Mammary epithelial cell (primary cell): ENCODE measurements at regions of chr9 and their contacts with region 1.

Region 1: DNA sequence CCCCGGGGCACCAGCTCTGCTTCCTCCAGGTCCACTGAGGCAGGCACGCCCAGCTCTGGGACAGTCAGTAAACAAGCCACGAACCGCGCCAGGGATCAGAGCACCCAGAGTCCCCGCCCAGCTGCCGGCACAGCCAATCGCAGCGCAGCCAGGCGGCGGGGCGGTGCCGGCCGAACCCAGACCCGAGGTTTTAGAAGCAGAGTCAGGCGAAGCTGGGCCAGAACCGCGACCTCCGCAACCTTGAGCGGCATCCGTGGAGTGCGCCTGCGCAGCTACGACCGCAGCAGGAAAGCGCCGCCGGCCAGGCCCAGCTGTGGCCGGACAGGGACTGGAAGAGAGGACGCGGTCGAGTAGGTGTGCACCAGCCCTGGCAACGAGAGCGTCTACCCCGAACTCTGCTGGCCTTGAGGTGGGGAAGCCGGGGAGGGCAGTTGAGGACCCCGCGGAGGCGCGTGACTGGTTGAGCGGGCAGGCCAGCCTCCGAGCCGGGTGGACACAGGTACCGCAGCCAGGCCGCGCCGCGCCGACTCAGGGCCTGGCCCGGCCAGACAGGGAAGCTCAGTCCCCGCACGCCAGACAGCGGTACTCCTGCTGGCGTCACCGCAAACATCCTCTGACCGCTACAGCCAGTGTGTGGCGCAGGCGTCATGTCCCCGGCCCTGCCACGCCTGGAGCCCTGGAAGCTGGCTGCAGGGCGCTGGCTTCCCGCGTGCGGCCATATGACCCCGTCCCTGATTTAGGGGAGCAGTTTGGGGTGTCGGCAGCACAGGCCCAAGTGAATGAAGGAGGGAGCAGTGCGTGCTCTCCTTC is at the start of gene CTSL:
- DNase-seq: peak; percentile 70
- H3K4me3 ChIP-seq: peak within 1 kb of the TSS; percentile 48 to 78 (median 70)
- H3K27ac ChIP-seq: peak within 1 kb of the TSS; percentile 58
- H3K4me1 ChIP-seq: no peaks in the 10 kb centered on the region
- H3K27me3 ChIP-seq: no peaks in the 10 kb centered on the region
- CTCF ChIP-seq: peak in 1 of 2 donors; percentile 49
- total RNA-seq, gene CTSL: 38.8 to 109 TPM

Region 2: DNA sequence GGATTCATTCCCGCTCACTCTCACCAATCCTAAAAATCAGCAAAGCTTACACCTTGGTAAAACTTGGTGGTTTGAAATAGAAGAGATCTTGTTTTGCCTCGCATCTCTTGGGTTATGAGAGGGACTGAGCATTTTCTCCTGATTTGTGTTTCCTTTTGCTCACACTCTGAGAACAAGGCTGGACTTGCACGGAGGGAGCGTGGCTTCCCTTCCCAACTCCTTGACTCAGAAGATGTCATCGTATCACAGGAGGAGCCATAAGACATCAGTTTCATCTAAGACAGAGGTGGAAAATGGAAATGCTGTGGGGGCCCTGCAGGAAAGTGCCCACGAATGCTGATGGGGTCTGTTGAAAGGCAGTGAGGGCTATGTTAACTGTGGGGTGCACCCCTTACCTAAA is 37.2 kb after region 1 on chr9:
- CTCF ChIA-PET with region 1: no interaction called
- dilution Hi-C with region 1: no loop called
- in situ Hi-C with region 1: no loop called
- intact Hi-C with region 1: loop called (anchors 2 kb)
- DNase-seq: peak; percentile 90
- H3K4me3 ChIP-seq: no peak overlapping the region
- H3K27ac ChIP-seq: peak overlapping the region; percentile 70
- H3K4me1 ChIP-seq: peaks cover 40% of the 10 kb centered on the region
- H3K27me3 ChIP-seq: no peaks in the 10 kb centered on the region
- CTCF ChIP-seq: no peak

Region 3: GRCh38 chr9:87834357-87834756 is 108.3 kb after region 1 on chr9:
- CTCF ChIA-PET with region 1: no interaction called
- dilution Hi-C with region 1: no loop called
- in situ Hi-C with region 1: no loop called
- intact Hi-C with region 1: no loop called
- DNase-seq: no peak
- H3K4me3 ChIP-seq: no peak overlapping the region
- H3K27ac ChIP-seq: no peak overlapping the region
- H3K4me1 ChIP-seq: no peaks in the 10 kb centered on the region
- H3K27me3 ChIP-seq: no peaks in the 10 kb centered on the region
- CTCF ChIP-seq: no peak